MCF 10A (cell line): ENCODE measurements at regions of chr2 and their contacts with region 1.

Region 1: DNA sequence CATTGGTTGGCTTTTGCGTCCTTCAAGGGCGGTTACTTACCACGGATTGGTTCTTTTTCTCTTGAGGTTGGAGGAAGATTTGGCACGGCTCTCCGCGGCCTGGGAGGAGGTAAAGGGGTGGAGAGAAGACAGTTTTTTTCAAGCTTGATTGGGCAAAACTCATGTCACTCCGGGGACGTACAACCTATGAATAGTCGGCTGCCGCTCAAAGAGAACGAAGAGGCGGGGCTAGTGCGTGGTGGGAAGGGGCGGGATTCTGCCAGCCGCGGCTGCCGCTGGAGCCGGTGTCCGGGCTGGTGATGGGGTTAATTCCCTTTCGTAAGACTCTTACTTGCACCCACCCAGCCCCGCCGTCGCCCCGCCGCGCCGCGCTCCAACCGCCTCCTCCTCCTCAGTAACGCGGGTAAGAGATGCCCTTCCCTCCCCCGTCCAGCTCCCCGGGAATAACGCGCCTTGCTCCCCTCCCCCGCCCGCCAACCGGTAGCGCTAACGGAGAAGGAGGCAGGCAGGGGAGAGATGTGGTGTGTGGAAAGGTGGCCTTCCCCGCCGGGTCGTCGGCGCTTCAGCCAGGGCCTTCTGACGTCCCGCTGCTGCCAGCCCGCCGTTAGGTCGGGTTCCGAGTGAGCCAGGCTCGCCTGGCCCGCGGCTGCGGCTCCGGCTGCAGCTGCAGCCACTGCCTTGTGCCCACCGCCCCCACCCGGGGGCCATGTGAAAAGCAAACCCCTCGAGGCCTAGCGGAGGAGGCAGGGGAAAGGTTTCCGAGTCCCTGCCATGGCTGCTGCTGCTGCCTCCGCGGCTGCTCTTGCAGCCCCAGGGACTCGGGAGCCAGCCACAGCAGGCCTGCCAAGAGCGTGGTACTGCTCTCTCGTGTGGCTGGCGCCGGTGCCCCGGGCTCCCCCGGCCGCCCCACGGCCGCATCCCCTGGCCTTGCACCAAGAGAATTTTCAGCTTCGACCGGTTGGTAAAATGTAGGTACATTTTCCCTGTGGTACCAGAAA is at the start of gene R3HDM1:
- DNase-seq: peak; percentile 100
- H3K4me3 Mint-ChIP-seq: no peak within 1 kb of the TSS
- H3K27ac Mint-ChIP-seq: no peak within 1 kb of the TSS
- H3K4me1 Mint-ChIP-seq: peaks cover 6% of the 10 kb centered on the region
- H3K27me3 Mint-ChIP-seq: no peaks in the 10 kb centered on the region
- CTCF ChIP-seq: peak; percentile 16
- total RNA-seq, gene R3HDM1: 52.4 and 54.6 TPM in 2 replicates

Region 2: DNA sequence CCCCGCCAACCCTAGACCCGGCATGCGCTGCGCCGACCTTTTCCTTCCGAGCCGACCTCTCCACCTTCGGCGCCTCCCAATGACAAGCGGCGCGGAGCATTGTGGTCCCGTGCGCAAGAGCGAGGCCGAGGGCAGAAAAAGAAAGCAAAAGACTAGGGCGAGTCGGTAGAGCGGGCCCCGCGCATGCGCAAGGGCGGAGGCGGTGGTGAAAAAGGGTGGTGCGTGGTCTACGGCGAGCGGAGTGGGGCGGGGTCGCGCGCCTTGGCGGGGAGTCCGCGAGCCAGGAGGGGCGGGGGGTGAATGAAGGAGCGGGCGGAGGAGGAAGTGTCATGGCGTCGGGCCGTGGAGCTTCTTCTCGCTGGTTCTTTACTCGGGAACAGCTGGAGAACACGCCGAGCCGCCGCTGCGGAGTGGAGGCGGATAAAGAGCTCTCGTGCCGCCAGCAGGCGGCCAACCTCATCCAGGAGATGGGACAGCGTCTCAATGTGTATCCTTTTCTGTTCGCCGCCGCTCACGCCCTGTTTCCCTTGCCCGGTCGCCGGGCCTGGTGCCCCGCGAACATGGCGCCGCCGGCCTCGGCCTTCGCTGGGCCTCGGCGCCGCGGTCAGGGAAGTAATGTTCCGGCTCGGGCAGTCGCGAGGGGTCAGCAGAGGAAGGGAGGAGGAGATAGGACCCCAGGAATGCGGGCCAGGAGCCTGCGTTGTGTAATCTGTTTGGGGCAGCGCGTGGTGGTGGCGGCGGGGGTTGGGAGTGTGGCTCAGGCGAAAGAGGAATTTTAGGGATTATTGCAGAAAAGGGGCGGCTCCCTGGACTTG is 612.8 kb before region 1 on chr2 and contains the start of gene CCNT2:
- CTCF ChIA-PET with region 1: no interaction called
- POLR2A ChIA-PET with region 1: interaction called, 6 read pairs
- intact Hi-C with region 1: loop called (anchors 5 kb)
- DNase-seq: peak; percentile 99
- H3K4me3 Mint-ChIP-seq: peak within 1 kb of the TSS; percentile 100
- H3K27ac Mint-ChIP-seq: peak within 1 kb of the TSS; percentile 100
- H3K4me1 Mint-ChIP-seq: peaks cover 12% of the 10 kb centered on the region
- H3K27me3 Mint-ChIP-seq: no peaks in the 10 kb centered on the region
- CTCF ChIP-seq: no peak
- total RNA-seq, gene CCNT2: 38.8 and 39.3 TPM in 2 replicates

Region 3: DNA sequence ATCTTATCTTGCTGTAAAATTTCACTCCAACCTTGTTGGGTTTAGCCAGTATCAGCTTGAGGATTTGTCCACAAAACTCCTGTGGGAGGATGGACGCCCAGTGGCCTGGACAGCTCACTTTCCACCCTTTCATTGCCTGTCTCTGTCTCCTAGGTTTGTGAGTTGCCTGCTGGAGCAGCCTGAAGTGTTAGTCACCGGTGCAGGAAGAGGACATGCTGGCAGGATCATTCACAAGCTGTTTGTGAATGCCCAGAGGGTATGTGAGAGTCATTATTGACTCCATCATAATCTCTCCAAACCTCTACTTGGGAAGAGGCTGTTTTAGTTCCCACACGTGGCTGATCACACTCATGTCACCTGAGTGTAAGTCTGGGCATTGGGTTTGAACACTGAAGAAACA is 367.1 kb before region 1 on chr2:
- CTCF ChIA-PET with region 1: no interaction called
- POLR2A ChIA-PET with region 1: no interaction called
- intact Hi-C with region 1: loop called (anchors 10 kb)
- DNase-seq: peak; percentile 75
- H3K4me3 Mint-ChIP-seq: no peak overlapping the region
- H3K27ac Mint-ChIP-seq: no peak overlapping the region
- H3K4me1 Mint-ChIP-seq: peaks cover 6% of the 10 kb centered on the region
- H3K27me3 Mint-ChIP-seq: no peaks in the 10 kb centered on the region
- CTCF ChIP-seq: no peak

Region 4: GRCh38 chr2:135546436-135546835 is 14.9 kb after region 1 on chr2:
- CTCF ChIA-PET with region 1: no interaction called
- POLR2A ChIA-PET with region 1: interaction called, 15 read pairs
- intact Hi-C with region 1: no loop called
- DNase-seq: no peak
- H3K4me3 Mint-ChIP-seq: no peak overlapping the region
- H3K27ac Mint-ChIP-seq: no peak overlapping the region
- H3K4me1 Mint-ChIP-seq: no peaks in the 10 kb centered on the region
- H3K27me3 Mint-ChIP-seq: no peaks in the 10 kb centered on the region
- CTCF ChIP-seq: no peak

Region 5: DNA sequence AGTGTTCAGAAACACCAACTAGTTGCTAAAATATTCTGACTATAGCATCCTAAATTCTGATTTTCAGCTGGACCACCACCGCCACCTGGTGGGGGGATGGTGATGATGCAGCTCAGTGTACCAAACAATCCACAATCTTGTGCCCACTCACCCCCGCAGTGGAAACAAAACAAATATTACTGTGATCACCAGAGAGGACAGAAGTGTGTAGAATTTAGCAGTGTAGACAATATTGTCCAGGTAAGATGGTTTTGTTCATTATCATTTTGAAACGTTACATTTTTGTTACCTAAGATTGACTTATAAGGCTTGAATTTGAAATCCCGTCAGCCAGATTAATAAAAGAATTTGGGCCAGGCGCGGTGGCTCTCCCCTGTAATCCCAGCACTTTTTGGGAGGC is 178.5 kb after region 1 on chr2:
- CTCF ChIA-PET with region 1: interaction called, 4 read pairs
- POLR2A ChIA-PET with region 1: no interaction called
- intact Hi-C with region 1: loop called (anchors 2 kb)
- DNase-seq: peak; percentile 62
- H3K4me3 Mint-ChIP-seq: no peak overlapping the region
- H3K27ac Mint-ChIP-seq: peak overlapping the region; percentile 3
- H3K4me1 Mint-ChIP-seq: no peaks in the 10 kb centered on the region
- H3K27me3 Mint-ChIP-seq: no peaks in the 10 kb centered on the region
- CTCF ChIP-seq: peak; percentile 86

Region 6: GRCh38 chr2:135741395-135742324 is 210.1 kb after region 1 on chr2 and contains the start of gene UBXN4:
- CTCF ChIA-PET with region 1: no interaction called
- POLR2A ChIA-PET with region 1: interaction called, 20 read pairs
- intact Hi-C with region 1: no loop called
- DNase-seq: peak; percentile 99
- H3K4me3 Mint-ChIP-seq: peak within 1 kb of the TSS; percentile 81
- H3K27ac Mint-ChIP-seq: peak within 1 kb of the TSS; percentile 95
- H3K4me1 Mint-ChIP-seq: peaks cover 23% of the 10 kb centered on the region
- H3K27me3 Mint-ChIP-seq: no peaks in the 10 kb centered on the region
- CTCF ChIP-seq: peak; percentile 30
- total RNA-seq, gene UBXN4: 79.0 and 101 TPM in 2 replicates